Endothelial cell of umbilical vein (primary cell): ENCODE measurements at regions of chr4 and their contacts with region 1.

Region 1: GRCh38 chr4:156968479-156968984 is 3.1 kb downstream of the PDGFC start:
- DNase-seq: peak; percentile 81
- H3K4me3 ChIP-seq: no peak overlapping the region
- H3K27ac ChIP-seq: peak overlapping the region; percentile 20
- H3K4me1 ChIP-seq: peaks cover 30% of the 10 kb centered on the region
- H3K27me3 ChIP-seq: no peaks in the 10 kb centered on the region
- CTCF ChIP-seq: peak; percentile 64 to 77
- POLR2A ChIP-seq: no peak

Region 2: DNA sequence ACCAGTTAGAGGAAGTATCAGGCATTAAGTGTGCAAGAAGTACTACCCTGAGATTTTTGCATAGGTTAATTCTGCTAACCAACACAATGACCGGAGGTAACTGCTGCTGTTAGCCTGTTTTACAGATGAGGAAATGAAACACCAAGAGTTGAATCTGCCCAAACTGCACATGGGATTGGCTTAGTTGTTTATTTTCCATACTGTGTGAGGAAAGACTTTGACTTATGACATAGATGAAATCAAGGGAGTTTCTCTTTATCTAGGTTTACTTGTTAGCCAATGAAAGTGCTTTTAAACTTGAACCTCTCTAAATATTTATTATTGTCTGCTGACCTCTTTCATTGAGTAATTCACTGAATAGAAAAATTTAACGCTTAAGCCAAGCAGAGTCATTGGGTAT is 1199.4 kb before region 1 on chr4:
- CTCF ChIA-PET with region 1: no interaction called
- POLR2A ChIA-PET with region 1: no interaction called
- dilution Hi-C with region 1: no loop called
- intact Hi-C with region 1: no loop called
- DNase-seq: no peak
- H3K4me3 ChIP-seq: no peak overlapping the region
- H3K27ac ChIP-seq: no peak overlapping the region
- H3K4me1 ChIP-seq: no peaks in the 10 kb centered on the region
- H3K27me3 ChIP-seq: no peaks in the 10 kb centered on the region
- CTCF ChIP-seq: no peak
- POLR2A ChIP-seq: no peak

Region 3: GRCh38 chr4:155953151-155954114 is 1015.1 kb before region 1 on chr4 and contains the start of gene CTSO:
- CTCF ChIA-PET with region 1: interaction called, 3 read pairs
- POLR2A ChIA-PET with region 1: no interaction called
- dilution Hi-C with region 1: no loop called
- intact Hi-C with region 1: loop called (anchors 5 kb)
- DNase-seq: peak; percentile 88
- H3K4me3 ChIP-seq: peak within 1 kb of the TSS; percentile 54 to 86 (median 79)
- H3K27ac ChIP-seq: peak within 1 kb of the TSS; percentile 92
- H3K4me1 ChIP-seq: peaks cover 6% of the 10 kb centered on the region
- H3K27me3 ChIP-seq: no peaks in the 10 kb centered on the region
- CTCF ChIP-seq: peak in 1 of 2 donors; percentile 58
- POLR2A ChIP-seq: peak; percentile 83
- total RNA-seq, gene CTSO: 6.7 and 7.9 TPM in 2 replicates

Region 4: GRCh38 chr4:156456830-156457229 is 511.7 kb before region 1 on chr4:
- CTCF ChIA-PET with region 1: no interaction called
- POLR2A ChIA-PET with region 1: no interaction called
- dilution Hi-C with region 1: no loop called
- intact Hi-C with region 1: no loop called
- DNase-seq: no peak
- H3K4me3 ChIP-seq: no peak overlapping the region
- H3K27ac ChIP-seq: no peak overlapping the region
- H3K4me1 ChIP-seq: no peaks in the 10 kb centered on the region
- H3K27me3 ChIP-seq: no peaks in the 10 kb centered on the region
- CTCF ChIP-seq: no peak
- POLR2A ChIP-seq: no peak

Region 5: DNA sequence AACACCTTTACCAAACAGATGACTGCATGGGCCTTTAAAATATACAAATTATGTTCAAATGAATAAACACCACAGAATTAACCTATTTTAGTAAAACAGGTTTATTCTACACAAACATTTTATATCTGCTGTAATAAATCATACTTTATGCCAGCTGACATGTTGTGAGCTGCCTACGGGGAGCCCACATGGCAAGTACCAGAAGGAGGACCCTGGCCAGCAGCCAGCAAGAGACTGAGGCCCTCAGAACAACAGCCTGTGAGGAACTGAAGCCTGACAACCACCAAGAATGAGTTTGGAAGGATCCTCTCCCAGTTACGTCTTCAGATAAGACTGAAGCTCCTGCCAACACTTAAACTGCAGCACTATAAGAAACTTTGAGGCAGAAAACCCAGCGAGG is 373.9 kb before region 1 on chr4:
- CTCF ChIA-PET with region 1: interaction called, 4 read pairs
- POLR2A ChIA-PET with region 1: no interaction called
- dilution Hi-C with region 1: no loop called
- intact Hi-C with region 1: loop called (anchors 5 kb)
- DNase-seq: no peak
- H3K4me3 ChIP-seq: no peak overlapping the region
- H3K27ac ChIP-seq: no peak overlapping the region
- H3K4me1 ChIP-seq: peaks cover 12% of the 10 kb centered on the region
- H3K27me3 ChIP-seq: no peaks in the 10 kb centered on the region
- CTCF ChIP-seq: no peak
- POLR2A ChIP-seq: no peak

Region 6: DNA sequence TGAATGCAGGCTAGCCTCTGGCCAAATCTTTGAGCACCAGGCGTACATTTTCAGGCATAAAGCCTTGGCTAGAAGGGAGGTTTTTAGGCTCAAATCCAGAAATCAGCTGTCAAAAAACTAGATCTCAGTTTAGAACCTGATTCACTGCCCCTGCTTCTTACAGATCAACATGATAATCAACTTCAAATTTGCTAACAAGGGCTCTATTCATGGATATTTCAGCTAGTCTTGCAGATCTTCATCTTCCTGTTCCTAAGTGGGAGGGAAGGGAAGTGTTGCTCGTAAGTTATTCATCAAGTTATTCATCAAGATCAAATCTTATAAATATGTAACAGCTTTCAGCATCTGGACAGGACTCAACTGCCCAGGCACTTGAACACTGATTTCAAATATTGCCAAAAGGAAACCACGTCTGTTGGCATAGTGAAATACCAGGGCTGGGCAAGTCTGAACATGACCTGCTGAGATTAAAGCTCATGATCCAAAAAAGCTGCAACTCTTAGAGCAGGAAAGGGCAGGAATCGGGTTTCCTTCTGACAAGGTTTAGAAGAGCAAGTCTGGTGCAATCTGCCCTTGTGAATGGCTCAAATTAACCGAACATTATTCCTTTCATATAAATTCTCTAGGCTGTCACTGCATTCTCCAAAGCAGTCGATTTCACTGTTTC is 197.2 kb before region 1 on chr4:
- CTCF ChIA-PET with region 1: interaction called, 13 read pairs
- POLR2A ChIA-PET with region 1: no interaction called
- dilution Hi-C with region 1: no loop called
- intact Hi-C with region 1: loop called (anchors 5 kb)
- DNase-seq: peak; percentile 88
- H3K4me3 ChIP-seq: peak overlapping the region in 1 of 3 experiments; percentile 13
- H3K27ac ChIP-seq: peak overlapping the region; percentile 77
- H3K4me1 ChIP-seq: peaks cover 14% of the 10 kb centered on the region
- H3K27me3 ChIP-seq: no peaks in the 10 kb centered on the region
- CTCF ChIP-seq: no peak
- POLR2A ChIP-seq: peak; percentile 36

Region 7: DNA sequence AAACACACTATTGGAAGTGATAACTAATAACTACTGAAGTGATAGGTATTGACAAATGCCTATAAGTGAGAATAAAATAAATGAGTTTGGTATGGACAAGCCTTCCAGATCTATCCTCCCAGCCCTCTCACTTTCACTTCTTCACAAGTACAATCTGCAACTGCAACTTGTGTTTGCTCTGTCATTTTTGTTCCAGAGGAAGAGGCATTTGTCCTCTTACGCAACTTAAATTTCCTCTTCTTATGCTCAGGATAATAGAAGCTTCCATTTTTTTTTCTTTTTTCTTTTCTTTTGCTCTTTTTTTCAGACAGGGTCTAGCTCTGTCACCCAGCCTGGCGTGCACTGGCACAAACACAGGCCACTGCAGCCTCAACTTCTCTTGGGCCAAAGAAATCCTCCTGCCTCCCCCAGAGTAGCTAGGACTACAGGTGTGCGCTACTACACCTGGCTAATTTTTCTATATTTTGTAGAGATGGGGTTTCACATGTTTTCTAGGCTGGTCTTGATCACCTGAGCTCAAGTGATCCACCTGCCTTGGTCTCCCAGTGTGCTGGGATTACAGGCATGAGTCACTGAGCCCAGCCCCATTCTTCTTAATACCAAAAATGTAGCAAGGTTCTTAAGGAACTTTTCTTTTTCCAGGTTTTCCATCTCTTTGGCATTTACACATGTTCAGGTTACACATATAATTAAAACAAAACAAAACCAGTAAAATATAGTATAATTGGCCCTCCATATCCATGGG is 70.0 kb before region 1 on chr4:
- CTCF ChIA-PET with region 1: no interaction called
- POLR2A ChIA-PET with region 1: no interaction called
- dilution Hi-C with region 1: no loop called
- intact Hi-C with region 1: no loop called
- DNase-seq: no peak
- H3K4me3 ChIP-seq: no peak overlapping the region
- H3K27ac ChIP-seq: no peak overlapping the region
- H3K4me1 ChIP-seq: no peaks in the 10 kb centered on the region
- H3K27me3 ChIP-seq: no peaks in the 10 kb centered on the region
- CTCF ChIP-seq: no peak
- POLR2A ChIP-seq: no peak

Region 8: DNA sequence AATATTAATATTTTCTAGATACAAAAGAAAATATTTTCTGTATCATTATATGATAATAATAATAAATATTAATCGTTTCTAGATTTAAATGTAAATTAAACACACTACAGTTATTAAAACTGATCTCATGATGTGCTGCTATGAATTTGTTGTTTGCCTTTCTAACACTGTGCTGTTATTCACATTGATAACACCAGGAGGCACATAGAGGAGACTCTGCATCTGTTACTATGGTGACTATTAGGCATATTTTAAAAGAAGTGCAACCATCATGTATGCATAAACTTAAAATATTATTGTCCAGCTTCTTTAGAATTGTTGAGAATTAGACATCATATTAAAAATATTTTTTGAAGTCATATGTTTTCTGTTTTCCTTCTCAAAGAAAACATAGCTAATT is 14.8 kb after region 1 on chr4:
- CTCF ChIA-PET with region 1: interaction called, 14 read pairs
- POLR2A ChIA-PET with region 1: no interaction called
- dilution Hi-C with region 1: no loop called
- intact Hi-C with region 1: no loop called
- DNase-seq: peak; percentile 44
- H3K4me3 ChIP-seq: no peak overlapping the region
- H3K27ac ChIP-seq: no peak overlapping the region
- H3K4me1 ChIP-seq: no peaks in the 10 kb centered on the region
- H3K27me3 ChIP-seq: no peaks in the 10 kb centered on the region
- CTCF ChIP-seq: peak; percentile 23 to 43
- POLR2A ChIP-seq: no peak

Region 9: GRCh38 chr4:157128395-157128794 is 159.9 kb after region 1 on chr4:
- CTCF ChIA-PET with region 1: interaction called, 6 read pairs
- POLR2A ChIA-PET with region 1: no interaction called
- dilution Hi-C with region 1: no loop called
- intact Hi-C with region 1: loop called (anchors 1 kb)
- DNase-seq: peak; percentile 74
- H3K4me3 ChIP-seq: no peak overlapping the region
- H3K27ac ChIP-seq: no peak overlapping the region
- H3K4me1 ChIP-seq: no peaks in the 10 kb centered on the region
- H3K27me3 ChIP-seq: no peaks in the 10 kb centered on the region
- CTCF ChIP-seq: peak; percentile 20 to 33
- POLR2A ChIP-seq: no peak